ENCODE measurements at regions of chr4 and their contacts with region 1.

Region 1: GRCh38 chr4:165131247-165131832 is 18.7 kb upstream of the TMEM192 start:
- DNase-seq: peak; percentile 60
- H3K4me3 ChIP-seq: no peak overlapping the region
- H3K27ac ChIP-seq: no peak overlapping the region
- H3K4me1 ChIP-seq: no peaks in the 10 kb centered on the region
- H3K27me3 ChIP-seq: no peaks in the 10 kb centered on the region
- CTCF ChIP-seq: peak; percentile 69 to 91 (median 90)
- POLR2A ChIP-seq: no peak

Region 2: DNA sequence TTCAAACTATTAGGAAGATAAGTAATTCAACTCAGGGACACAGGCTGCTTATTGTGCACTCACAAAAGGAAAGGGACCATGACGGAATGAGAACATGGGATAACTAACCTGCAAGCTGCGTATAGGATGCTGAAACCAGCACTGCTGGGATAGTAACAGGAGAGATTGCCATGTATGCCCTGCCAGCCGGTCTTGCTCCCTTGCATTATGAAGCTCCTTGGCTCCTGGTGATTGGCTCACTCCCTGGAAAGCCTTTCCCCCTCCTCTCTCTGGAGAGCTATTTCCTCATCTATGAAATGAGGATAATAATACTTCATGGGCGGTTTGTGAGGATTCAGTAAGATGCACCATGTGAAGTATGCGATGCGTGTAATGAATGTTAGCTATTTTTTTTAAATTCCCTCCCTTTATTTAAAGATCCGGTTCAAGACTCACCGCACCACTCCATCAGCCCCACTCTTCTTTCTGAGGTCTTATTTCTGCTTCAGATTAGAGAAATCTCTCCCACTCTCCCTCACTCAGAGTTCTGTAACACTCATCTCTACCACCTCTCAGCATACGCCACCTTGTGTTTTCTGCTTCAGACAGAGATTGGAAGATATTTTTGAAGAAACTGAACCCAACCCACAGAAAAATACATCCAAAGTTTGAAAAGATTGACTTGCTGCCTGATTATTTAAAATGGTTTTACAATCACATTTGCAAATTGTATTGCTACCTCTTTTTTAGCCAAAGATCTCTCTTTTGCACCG is 214.5 kb after region 1 on chr4:
- intact Hi-C with region 1: loop called (anchors 5 kb)
- DNase-seq: no peak
- H3K4me3 ChIP-seq: no peak overlapping the region
- H3K27ac ChIP-seq: no peak overlapping the region
- H3K4me1 ChIP-seq: no peaks in the 10 kb centered on the region
- H3K27me3 ChIP-seq: no peaks in the 10 kb centered on the region
- CTCF ChIP-seq: no peak
- POLR2A ChIP-seq: no peak

Region 3: GRCh38 chr4:166091912-166092510 is 960.7 kb after region 1 on chr4:
- intact Hi-C with region 1: no loop called
- DNase-seq: peak; percentile 9
- H3K4me3 ChIP-seq: no peak overlapping the region
- H3K27ac ChIP-seq: no peak overlapping the region
- H3K4me1 ChIP-seq: no peaks in the 10 kb centered on the region
- H3K27me3 ChIP-seq: no peaks in the 10 kb centered on the region
- CTCF ChIP-seq: peak in 3 of 4 experiments; percentile 60 to 76 (median 74)
- POLR2A ChIP-seq: no peak